ENCODE measurements at regions of chr5 and their contacts with region 1.

Region 1: GRCh38 chr5:172188033-172188892 is at the start of gene STK10:
- DNase-seq: no peak
- ATAC-seq: peak; percentile 84
- H3K4me3 ChIP-seq: peak within 1 kb of the TSS; percentile 89
- H3K27ac ChIP-seq: peak within 1 kb of the TSS; percentile 68
- H3K4me1 ChIP-seq: peaks cover 20% of the 10 kb centered on the region
- H3K27me3 ChIP-seq: no peaks in the 10 kb centered on the region
- CTCF ChIP-seq: peak; percentile 80 to 99 (median 89); a peak in 5 of 6 replicates
- EP300 ChIP-seq: 0 out of 4 replicates have a peak, but pooled peaks of 1 of the 2 experiments have one; percentile 3
- POLR2A ChIP-seq: peak; percentile 65
- RAD21 ChIP-seq: peak; percentile 85
- polyA plus RNA-seq, gene STK10: 14.2 to 20.4 TPM

Region 2: DNA sequence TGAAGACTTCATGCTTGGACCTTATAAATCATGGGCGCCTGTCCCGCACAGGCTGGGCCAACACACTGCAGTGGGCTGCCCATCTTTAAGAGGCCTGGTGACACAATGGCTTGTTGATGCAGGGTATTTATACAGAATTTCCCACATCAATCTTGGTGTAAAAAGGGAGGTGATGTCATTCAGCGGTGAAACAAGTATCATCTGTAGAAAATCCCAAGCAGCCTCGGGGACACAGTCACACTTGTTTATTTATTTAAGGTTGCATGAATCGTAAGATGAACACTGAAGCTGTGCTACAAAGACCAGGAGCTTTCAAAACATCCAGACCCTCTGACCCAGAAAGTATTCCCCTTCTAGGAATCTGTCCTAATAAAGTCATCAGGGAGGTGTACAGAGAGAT is 362.1 kb before region 1 on chr5:
- CTCF ChIA-PET with region 1: no interaction called
- POLR2A ChIA-PET with region 1: no interaction called
- RAD21 ChIA-PET with region 1: no interaction called
- SMC1A ChIA-PET with region 1: no interaction called
- in situ Hi-C with region 1: no loop called
- intact Hi-C with region 1: no loop called
- DNase-seq: no peak
- ATAC-seq: no peak
- H3K4me3 ChIP-seq: no peak overlapping the region
- H3K27ac ChIP-seq: no peak overlapping the region
- H3K4me1 ChIP-seq: no peaks in the 10 kb centered on the region
- H3K27me3 ChIP-seq: no peaks in the 10 kb centered on the region
- CTCF ChIP-seq: no peak
- EP300 ChIP-seq: no peak
- POLR2A ChIP-seq: no peak
- RAD21 ChIP-seq: no peak

Region 3: DNA sequence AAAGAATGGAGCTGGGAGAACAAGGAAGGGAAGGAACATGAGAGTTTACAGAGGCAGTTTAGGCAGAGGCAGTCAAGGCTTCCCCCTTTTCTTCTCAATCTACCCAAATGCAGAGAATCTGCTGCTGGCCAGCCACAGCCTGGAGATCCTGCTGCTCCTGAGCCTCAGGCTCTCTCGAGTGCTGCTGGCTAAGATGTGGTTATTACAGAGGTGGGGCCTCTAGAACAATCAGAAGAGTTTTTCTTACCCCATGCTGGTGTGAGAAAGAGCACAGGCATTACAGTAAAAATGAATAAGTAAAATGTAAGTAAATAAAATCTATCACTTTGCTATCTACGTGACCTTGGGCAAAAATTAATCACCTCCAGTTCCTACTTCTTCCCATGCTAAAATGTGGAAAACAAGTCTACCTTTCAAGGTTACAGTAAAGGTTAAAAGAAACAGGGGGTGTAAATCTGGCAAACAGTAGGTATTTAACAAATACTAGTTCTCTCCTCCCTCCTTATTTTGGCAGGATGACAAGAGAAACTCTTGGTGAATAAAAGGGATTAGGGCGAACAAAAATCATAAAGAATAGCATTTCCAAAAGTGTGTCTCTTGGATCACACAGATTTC is 212.9 kb before region 1 on chr5:
- CTCF ChIA-PET with region 1: no interaction called
- POLR2A ChIA-PET with region 1: no interaction called
- RAD21 ChIA-PET with region 1: no interaction called
- SMC1A ChIA-PET with region 1: no interaction called
- in situ Hi-C with region 1: no loop called
- intact Hi-C with region 1: no loop called
- DNase-seq: no peak
- ATAC-seq: no peak
- H3K4me3 ChIP-seq: no peak overlapping the region; the same call in 1 of the 2 replicates
- H3K27ac ChIP-seq: no peak overlapping the region; the same call in 1 of the 2 replicates
- H3K4me1 ChIP-seq: peaks cover 18% of the 10 kb centered on the region
- H3K27me3 ChIP-seq: no peaks in the 10 kb centered on the region
- CTCF ChIP-seq: no peak
- EP300 ChIP-seq: no peak
- POLR2A ChIP-seq: no peak
- RAD21 ChIP-seq: no peak

Region 4: GRCh38 chr5:172071289-172071875 is 116.9 kb before region 1 on chr5:
- CTCF ChIA-PET with region 1: interaction called, 10 read pairs
- POLR2A ChIA-PET with region 1: interaction called, 3 read pairs
- RAD21 ChIA-PET with region 1: interaction called, 5 read pairs
- SMC1A ChIA-PET with region 1: interaction called, 3 read pairs
- in situ Hi-C with region 1: no loop called
- intact Hi-C with region 1: no loop called
- DNase-seq: no peak
- ATAC-seq: peak; percentile 36
- H3K4me3 ChIP-seq: no peak overlapping the region
- H3K27ac ChIP-seq: no peak overlapping the region
- H3K4me1 ChIP-seq: peaks cover 11% of the 10 kb centered on the region
- H3K27me3 ChIP-seq: no peaks in the 10 kb centered on the region
- CTCF ChIP-seq: no peak
- EP300 ChIP-seq: no peak
- POLR2A ChIP-seq: no peak
- RAD21 ChIP-seq: no peak

Region 5: DNA sequence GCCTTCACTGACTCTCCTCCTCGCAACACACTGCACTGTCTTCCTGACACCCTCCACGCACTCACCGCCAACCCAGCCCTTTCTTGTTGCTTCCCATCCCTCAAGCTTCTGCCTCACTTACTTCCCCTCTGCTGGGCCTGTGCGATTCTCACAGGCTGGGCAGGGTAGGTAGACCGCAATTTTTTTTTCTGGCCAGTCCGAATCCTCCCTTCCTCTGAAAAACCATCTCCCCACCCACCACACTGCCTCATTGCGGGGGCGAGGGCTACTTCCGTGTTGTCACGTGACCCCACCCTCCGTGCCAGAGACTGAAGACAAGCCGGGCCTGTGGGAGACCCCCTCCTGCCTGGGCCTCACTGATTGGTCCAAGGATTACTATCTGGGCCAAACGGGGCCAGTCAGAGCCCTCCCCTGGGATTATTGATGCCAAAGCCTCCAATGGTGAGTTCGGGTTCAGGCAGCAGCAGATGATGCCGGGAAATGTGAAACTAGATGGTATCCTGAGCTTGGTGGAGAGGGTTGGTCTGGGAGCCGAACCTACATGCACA is 73.3 kb before region 1 on chr5:
- CTCF ChIA-PET with region 1: interaction called, 162 read pairs
- POLR2A ChIA-PET with region 1: interaction called, 115 read pairs
- RAD21 ChIA-PET with region 1: interaction called, 95 read pairs
- SMC1A ChIA-PET with region 1: interaction called, 165 read pairs
- in situ Hi-C with region 1: no loop called
- intact Hi-C with region 1: loop called (anchors 1 kb)
- DNase-seq: peak; percentile 93
- ATAC-seq: peak; percentile 75
- H3K4me3 ChIP-seq: peak overlapping the region; percentile 62; the same call in 1 of the 2 replicates
- H3K27ac ChIP-seq: peak overlapping the region; percentile 95
- H3K4me1 ChIP-seq: peaks cover 43% of the 10 kb centered on the region
- H3K27me3 ChIP-seq: no peaks in the 10 kb centered on the region
- CTCF ChIP-seq: no peak
- EP300 ChIP-seq: peak; percentile 62 to 75
- POLR2A ChIP-seq: peak; percentile 86
- RAD21 ChIP-seq: peak; percentile 23; the same call in 1 of the 2 replicates

Region 6: DNA sequence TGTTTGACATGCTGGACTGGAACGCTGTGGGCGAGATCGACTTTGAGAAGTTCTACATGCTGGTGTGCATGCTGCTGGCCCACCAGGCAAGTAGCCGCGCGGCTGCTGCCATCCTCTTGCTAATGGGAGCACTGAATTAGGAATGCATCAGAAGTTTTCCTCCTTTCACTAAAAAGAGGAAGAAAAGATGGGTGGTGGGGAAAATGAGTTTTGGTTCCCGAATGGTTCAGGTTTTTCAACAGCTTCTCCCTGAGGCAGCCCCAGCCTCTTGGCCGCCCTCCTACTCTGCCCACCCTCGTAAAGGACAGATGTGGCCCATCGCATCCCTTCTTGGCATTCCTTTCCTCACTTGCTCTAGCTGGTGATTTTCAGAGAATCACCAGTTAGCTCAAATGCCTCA is 11.2 kb after region 1 on chr5:
- CTCF ChIA-PET with region 1: interaction called, 14 read pairs
- POLR2A ChIA-PET with region 1: no interaction called
- RAD21 ChIA-PET with region 1: no interaction called
- SMC1A ChIA-PET with region 1: interaction called, 3 read pairs
- in situ Hi-C with region 1: no loop called
- intact Hi-C with region 1: no loop called
- DNase-seq: no peak
- ATAC-seq: no peak
- H3K4me3 ChIP-seq: no peak overlapping the region
- H3K27ac ChIP-seq: no peak overlapping the region
- H3K4me1 ChIP-seq: no peaks in the 10 kb centered on the region; the same call in 1 of the 2 replicates
- H3K27me3 ChIP-seq: no peaks in the 10 kb centered on the region
- CTCF ChIP-seq: no peak
- EP300 ChIP-seq: no peak
- POLR2A ChIP-seq: no peak
- RAD21 ChIP-seq: no peak

Region 7: DNA sequence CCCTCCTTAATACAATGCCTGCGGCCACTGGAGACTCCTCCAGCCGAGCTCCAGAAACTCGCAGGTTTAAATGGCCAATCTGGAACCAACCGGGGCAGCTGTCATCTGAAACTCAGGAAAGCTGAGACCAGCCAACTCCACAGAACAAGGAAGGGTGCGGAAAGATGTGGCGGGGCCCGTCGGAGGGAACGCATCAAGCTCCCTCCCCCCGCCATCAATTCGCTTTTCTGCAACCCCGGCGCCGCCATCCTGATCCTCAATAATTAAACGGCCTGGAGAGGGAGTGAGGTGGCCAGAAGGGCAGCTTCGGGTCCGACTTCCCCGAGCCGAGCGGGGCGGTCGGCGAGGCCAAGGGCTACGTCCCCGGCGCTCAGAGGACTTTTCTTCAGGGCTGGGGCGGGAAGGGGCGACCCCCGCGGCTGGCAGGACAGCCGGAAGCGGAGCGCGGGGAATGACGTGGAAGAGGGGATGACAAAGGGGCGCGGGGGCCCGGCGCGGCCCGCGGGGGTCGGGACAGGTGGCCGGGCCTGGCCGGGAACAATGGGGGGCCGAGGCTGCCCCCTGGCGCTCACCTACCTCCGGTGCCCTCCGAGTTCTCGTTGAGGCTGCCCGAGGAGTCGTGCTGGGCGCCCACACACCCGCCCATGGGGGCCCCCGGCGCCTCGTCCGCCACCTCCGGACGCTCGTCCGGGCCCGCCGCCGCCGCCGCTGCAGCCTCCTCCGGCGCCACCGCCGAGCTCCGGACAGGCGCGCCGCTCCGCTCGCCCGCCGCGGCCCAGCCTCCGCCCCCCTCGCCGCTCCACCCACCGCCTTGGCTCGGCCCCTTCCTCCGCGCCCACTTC is 95.0 kb after region 1 on chr5 and contains the start of gene UBTD2:
- CTCF ChIA-PET with region 1: interaction called, 34 read pairs
- POLR2A ChIA-PET with region 1: interaction called, 7 read pairs
- RAD21 ChIA-PET with region 1: interaction called, 17 read pairs
- SMC1A ChIA-PET with region 1: interaction called, 54 read pairs
- in situ Hi-C with region 1: no loop called
- intact Hi-C with region 1: no loop called
- DNase-seq: no peak
- ATAC-seq: peak; percentile 83
- H3K4me3 ChIP-seq: peak within 1 kb of the TSS; percentile 99
- H3K27ac ChIP-seq: peak within 1 kb of the TSS; percentile 72
- H3K4me1 ChIP-seq: no peaks in the 10 kb centered on the region; the same call in 1 of the 2 replicates
- H3K27me3 ChIP-seq: no peaks in the 10 kb centered on the region
- CTCF ChIP-seq: peak; percentile 30 to 64 (median 57); a peak in 3 of 6 replicates
- EP300 ChIP-seq: no peak
- POLR2A ChIP-seq: no peak
- RAD21 ChIP-seq: peak; percentile 46
- polyA plus RNA-seq, gene UBTD2: 7.7 to 12.5 TPM

Region 8: GRCh38 chr5:172370648-172371545 is 182.6 kb after region 1 on chr5:
- CTCF ChIA-PET with region 1: interaction called, 6 read pairs
- POLR2A ChIA-PET with region 1: no interaction called
- RAD21 ChIA-PET with region 1: interaction called, 5 read pairs
- SMC1A ChIA-PET with region 1: no interaction called
- in situ Hi-C with region 1: no loop called
- intact Hi-C with region 1: loop called (anchors 10 kb)
- DNase-seq: no peak
- ATAC-seq: peak; percentile 65
- H3K4me3 ChIP-seq: no peak overlapping the region
- H3K27ac ChIP-seq: no peak overlapping the region
- H3K4me1 ChIP-seq: peaks cover 3% of the 10 kb centered on the region; the same call in 1 of the 2 replicates
- H3K27me3 ChIP-seq: no peaks in the 10 kb centered on the region
- CTCF ChIP-seq: peak; percentile 47 to 92 (median 73)
- EP300 ChIP-seq: no peak
- POLR2A ChIP-seq: no peak
- RAD21 ChIP-seq: peak; percentile 64